H1 (cell line): ENCODE measurements at regions of chr6 and their contacts with region 1.

Region 1: GRCh38 chr6:133923938-133924593 is 29.0 kb upstream of the TBPL1 start:
- DNase-seq: peak in 1 of 2 experiments; percentile 60
- H3K4me3 ChIP-seq: peak overlapping the region in 1 of 4 experiments; percentile 27; a peak in 1 of 8 replicates
- H3K27ac ChIP-seq: no peak overlapping the region
- H3K4me1 ChIP-seq: peaks cover 0 to 3% (median 0%) of the 10 kb centered on the region in 4 experiments; a peak in 1 of 7 replicates
- H3K27me3 ChIP-seq: no peaks in the 10 kb centered on the region
- CTCF ChIP-seq: peak in 2 of 3 experiments; percentile 77 to 83; a peak in 3 of 4 replicates
- EP300 ChIP-seq: no peak
- POLR2A ChIP-seq: no peak
- RAD21 ChIP-seq: peak; percentile 96

Region 2: DNA sequence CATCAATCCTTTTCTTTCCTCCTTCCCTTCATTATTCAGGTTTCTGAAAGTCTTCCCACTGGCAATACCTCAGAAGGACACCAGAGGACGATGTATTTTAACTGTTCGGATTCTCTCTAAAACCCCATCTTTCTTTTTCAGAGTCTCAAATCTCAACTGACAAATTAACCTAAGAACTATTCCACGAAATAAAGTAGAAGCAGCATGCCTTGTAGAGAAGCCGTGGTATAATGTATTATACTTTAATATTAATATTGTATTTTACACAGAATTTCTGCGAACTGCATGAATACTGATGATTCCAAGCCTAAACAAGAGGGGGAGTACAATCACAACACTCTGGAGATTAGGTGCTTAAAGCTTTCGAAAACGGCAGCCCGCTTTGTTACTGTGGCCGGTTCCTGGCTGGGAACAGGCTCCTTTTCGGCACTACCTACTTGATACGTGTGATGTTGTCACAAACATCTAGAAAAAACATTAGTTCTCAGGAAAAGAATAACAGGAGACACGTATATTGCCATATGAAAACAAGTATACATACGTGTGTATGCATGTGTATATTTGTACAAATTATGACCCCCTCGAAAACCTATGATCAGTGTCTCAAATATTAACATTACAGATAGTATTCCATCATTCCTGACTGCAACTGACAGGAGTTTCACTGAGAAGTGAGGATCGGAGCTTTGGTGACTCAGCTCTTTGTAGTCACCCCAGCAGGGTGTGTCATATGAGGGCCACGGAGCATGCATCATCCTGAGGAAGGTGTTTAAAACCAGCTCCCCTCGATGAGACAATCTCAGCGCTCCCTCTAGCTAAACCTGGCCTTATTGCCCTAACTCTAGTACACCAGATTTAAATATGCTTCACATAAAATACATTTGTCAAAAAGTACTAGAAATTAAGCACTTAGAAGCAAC is 354.8 kb before region 1 on chr6:
- CTCF ChIA-PET with region 1: interaction called, 49 read pairs
- POLR2A ChIA-PET with region 1: interaction called, 3 read pairs
- DNase-seq: no peak
- H3K4me3 ChIP-seq: peak overlapping the region; percentile 3 to 56 (median 24); a peak in 6 of 8 replicates
- H3K27ac ChIP-seq: no peak overlapping the region
- H3K4me1 ChIP-seq: no peaks in the 10 kb centered on the region
- H3K27me3 ChIP-seq: no peaks in the 10 kb centered on the region
- CTCF ChIP-seq: peak in 2 of 3 experiments; percentile 58 to 66; a peak in 2 of 4 replicates
- EP300 ChIP-seq: no peak
- POLR2A ChIP-seq: no peak
- RAD21 ChIP-seq: peak; percentile 76 to 78

Region 3: DNA sequence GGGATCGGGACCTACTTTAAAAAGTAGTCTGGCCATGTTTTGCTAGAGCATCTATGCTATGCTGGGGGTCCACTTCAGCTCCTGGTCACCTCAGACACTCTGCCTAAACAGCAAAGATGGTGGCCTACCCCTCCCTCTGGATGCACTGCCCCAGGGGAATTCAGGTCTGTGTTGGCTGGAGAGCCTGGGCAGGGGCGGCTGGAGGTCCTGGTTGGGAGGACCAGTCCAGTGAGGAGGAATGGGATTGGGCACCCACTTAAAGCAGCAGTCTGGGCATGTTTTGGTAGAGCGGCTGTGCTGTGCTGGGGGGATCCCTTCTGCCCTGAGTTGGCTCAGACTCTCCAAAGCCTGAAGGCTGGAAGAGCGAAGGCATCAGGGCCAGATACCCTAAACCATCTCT is 58.4 kb before region 1 on chr6:
- CTCF ChIA-PET with region 1: no interaction called
- POLR2A ChIA-PET with region 1: no interaction called
- DNase-seq: no peak
- H3K4me3 ChIP-seq: no peak overlapping the region
- H3K27ac ChIP-seq: no peak overlapping the region
- H3K4me1 ChIP-seq: no peaks in the 10 kb centered on the region
- H3K27me3 ChIP-seq: no peaks in the 10 kb centered on the region
- CTCF ChIP-seq: no peak
- EP300 ChIP-seq: no peak
- POLR2A ChIP-seq: no peak
- RAD21 ChIP-seq: no peak

Region 4: GRCh38 chr6:133939778-133940667 is 16.0 kb after region 1 on chr6:
- CTCF ChIA-PET with region 1: interaction called, 19 read pairs
- POLR2A ChIA-PET with region 1: no interaction called
- DNase-seq: no peak
- H3K4me3 ChIP-seq: no peak overlapping the region
- H3K27ac ChIP-seq: no peak overlapping the region
- H3K4me1 ChIP-seq: no peaks in the 10 kb centered on the region
- H3K27me3 ChIP-seq: no peaks in the 10 kb centered on the region
- CTCF ChIP-seq: no peak
- EP300 ChIP-seq: no peak
- POLR2A ChIP-seq: no peak
- RAD21 ChIP-seq: no peak

Region 5: GRCh38 chr6:133959667-133960368 is 35.8 kb after region 1 on chr6:
- CTCF ChIA-PET with region 1: interaction called, 29 read pairs
- POLR2A ChIA-PET with region 1: no interaction called
- DNase-seq: no peak
- H3K4me3 ChIP-seq: no peak overlapping the region
- H3K27ac ChIP-seq: no peak overlapping the region
- H3K4me1 ChIP-seq: peaks cover 0 to 4% (median under 1%) of the 10 kb centered on the region in 4 experiments; a peak in 2 of 7 replicates
- H3K27me3 ChIP-seq: no peaks in the 10 kb centered on the region
- CTCF ChIP-seq: no peak
- EP300 ChIP-seq: no peak
- POLR2A ChIP-seq: no peak
- RAD21 ChIP-seq: no peak

Region 6: DNA sequence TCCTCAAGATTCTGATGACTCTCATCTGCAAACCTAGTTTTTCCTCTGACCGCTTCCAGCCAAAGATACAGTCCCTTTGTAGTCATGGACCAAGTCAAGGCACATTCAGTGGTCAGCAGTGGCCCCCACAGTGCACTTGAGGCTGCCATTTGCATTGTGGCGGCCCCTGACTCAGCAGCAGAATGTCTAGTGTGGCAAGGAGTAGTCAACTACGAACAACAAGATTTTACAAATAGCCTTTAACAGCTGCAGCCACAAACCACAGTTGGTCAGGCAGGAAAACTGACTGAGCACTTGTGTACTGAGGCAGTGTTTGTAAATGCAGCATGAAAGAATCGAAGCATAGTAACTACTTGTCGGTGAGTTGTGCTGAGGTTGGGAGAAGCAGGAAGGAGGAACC is 78.8 kb after region 1 on chr6:
- CTCF ChIA-PET with region 1: interaction called, 13 read pairs
- POLR2A ChIA-PET with region 1: no interaction called
- DNase-seq: no peak
- H3K4me3 ChIP-seq: no peak overlapping the region
- H3K27ac ChIP-seq: no peak overlapping the region
- H3K4me1 ChIP-seq: peaks cover 0 to 3% (median 1%) of the 10 kb centered on the region in 4 experiments; a peak in 2 of 7 replicates
- H3K27me3 ChIP-seq: no peaks in the 10 kb centered on the region
- CTCF ChIP-seq: no peak
- EP300 ChIP-seq: no peak
- POLR2A ChIP-seq: no peak
- RAD21 ChIP-seq: no peak

Region 7: GRCh38 chr6:134090591-134090990 is 166.5 kb after region 1 on chr6:
- CTCF ChIA-PET with region 1: interaction called, 374 read pairs
- POLR2A ChIA-PET with region 1: no interaction called
- DNase-seq: no peak
- H3K4me3 ChIP-seq: no peak overlapping the region
- H3K27ac ChIP-seq: no peak overlapping the region
- H3K4me1 ChIP-seq: no peaks in the 10 kb centered on the region
- H3K27me3 ChIP-seq: peaks cover 0 to 1% (median 0%) of the 10 kb centered on the region in 4 experiments; a peak in 1 of 7 replicates
- CTCF ChIP-seq: no peak
- EP300 ChIP-seq: no peak
- POLR2A ChIP-seq: no peak
- RAD21 ChIP-seq: no peak